Activated CD4-positive, alpha-beta T cell treated with anti-CD3 and anti-CD28 coated beads, Interleukin-2, amount 10 ng/mL, durations not matched to agents 7 days and 5 days (primary cell): ENCODE measurements at regions of chr7 and their contacts with region 1.

Region 1: GRCh38 chr7:150514748-150515222 is at the start of gene GIMAP7:
- DNase-seq: peak; percentile 86
- H3K4me3 Mint-ChIP-seq: peak within 1 kb of the TSS; percentile 98
- H3K27ac Mint-ChIP-seq: peak within 1 kb of the TSS; percentile 97
- H3K4me1 Mint-ChIP-seq: peaks cover 48% of the 10 kb centered on the region
- H3K27me3 Mint-ChIP-seq: no peaks in the 10 kb centered on the region
- total RNA-seq, gene GIMAP7: 239 to 244 TPM

Region 2: GRCh38 chr7:150400008-150400787 is 114.6 kb before region 1 on chr7:
- CTCF ChIA-PET with region 1: no interaction called
- POLR2A ChIA-PET with region 1: no interaction called
- DNase-seq: no peak
- H3K4me3 Mint-ChIP-seq: no peak overlapping the region
- H3K27ac Mint-ChIP-seq: peak overlapping the region; percentile 15
- H3K4me1 Mint-ChIP-seq: peaks cover 17% of the 10 kb centered on the region
- H3K27me3 Mint-ChIP-seq: no peaks in the 10 kb centered on the region

Region 3: GRCh38 chr7:150413640-150414081 is 101.1 kb before region 1 on chr7:
- CTCF ChIA-PET with region 1: no interaction called
- POLR2A ChIA-PET with region 1: no interaction called
- DNase-seq: no peak
- H3K4me3 Mint-ChIP-seq: no peak overlapping the region
- H3K27ac Mint-ChIP-seq: no peak overlapping the region
- H3K4me1 Mint-ChIP-seq: peaks cover 3% of the 10 kb centered on the region
- H3K27me3 Mint-ChIP-seq: no peaks in the 10 kb centered on the region

Region 4: GRCh38 chr7:150502519-150502918 is 12.3 kb before region 1 on chr7:
- CTCF ChIA-PET with region 1: interaction called, 15 read pairs
- POLR2A ChIA-PET with region 1: interaction called, 13 read pairs
- DNase-seq: peak; percentile 73
- H3K4me3 Mint-ChIP-seq: peak overlapping the region; percentile 58
- H3K27ac Mint-ChIP-seq: peak overlapping the region; percentile 92
- H3K4me1 Mint-ChIP-seq: peaks cover 82% of the 10 kb centered on the region
- H3K27me3 Mint-ChIP-seq: no peaks in the 10 kb centered on the region

Region 5: DNA sequence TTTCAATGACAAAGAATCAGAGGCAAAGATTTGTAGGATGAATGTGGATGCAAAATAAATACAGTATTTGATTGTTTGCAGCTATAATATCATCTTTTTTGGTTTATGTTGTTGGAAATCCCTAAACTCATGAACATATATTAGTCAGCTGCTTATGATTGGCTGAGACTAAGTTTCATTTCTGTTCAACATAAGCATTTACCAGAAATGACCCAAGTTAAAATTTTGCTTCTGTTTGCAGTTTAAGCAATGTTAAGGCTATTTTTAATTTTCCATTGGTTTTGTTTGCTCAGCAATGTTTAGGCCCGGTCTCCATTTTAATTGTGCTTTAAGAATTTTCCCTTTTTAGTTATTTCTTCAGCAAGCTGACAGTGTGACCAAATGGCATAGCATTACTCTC is 95.4 kb after region 1 on chr7:
- CTCF ChIA-PET with region 1: no interaction called
- POLR2A ChIA-PET with region 1: no interaction called
- DNase-seq: no peak
- H3K4me3 Mint-ChIP-seq: no peak overlapping the region
- H3K27ac Mint-ChIP-seq: peak overlapping the region; percentile 71
- H3K4me1 Mint-ChIP-seq: peaks cover 73% of the 10 kb centered on the region
- H3K27me3 Mint-ChIP-seq: no peaks in the 10 kb centered on the region

Region 6: DNA sequence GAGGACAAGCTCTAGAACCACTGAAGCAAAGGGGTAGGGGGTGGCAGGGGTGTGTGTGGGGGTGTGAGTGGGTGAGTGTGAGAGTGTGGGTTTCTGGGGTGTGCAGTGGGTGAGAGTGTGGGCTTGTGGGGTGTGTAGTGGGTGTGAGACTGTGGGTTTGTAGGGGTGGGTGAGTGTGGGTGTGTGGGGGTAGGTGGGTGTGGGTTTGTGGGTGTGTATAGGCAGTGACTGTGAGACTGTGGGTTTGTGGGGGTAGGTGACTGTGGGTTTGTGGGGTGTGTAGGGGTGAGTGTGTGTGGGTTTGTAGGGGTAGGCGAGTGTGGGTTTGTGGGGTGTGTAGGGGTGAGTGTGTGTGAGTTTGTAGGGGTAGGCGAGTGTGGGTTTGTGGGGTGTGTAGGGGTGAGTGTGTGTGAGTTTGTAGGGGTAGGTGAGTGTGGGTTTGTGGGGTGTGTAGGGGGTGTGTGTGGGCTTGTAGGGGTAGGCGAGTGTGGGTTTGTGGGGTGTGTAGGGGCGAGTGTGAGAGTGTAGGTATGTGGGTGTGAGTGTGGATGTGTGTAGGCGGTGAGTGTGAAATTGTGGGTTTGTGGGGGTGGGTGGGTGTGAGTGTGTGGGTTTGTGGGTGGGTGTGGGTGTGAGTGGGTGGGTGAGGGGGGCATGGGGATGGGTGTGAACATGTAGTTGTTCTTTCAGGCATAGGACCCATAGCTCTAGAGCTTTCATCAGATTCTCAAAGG is 484.9 kb after region 1 on chr7:
- CTCF ChIA-PET with region 1: no interaction called
- POLR2A ChIA-PET with region 1: no interaction called
- DNase-seq: no peak
- H3K4me3 Mint-ChIP-seq: no peak overlapping the region
- H3K27ac Mint-ChIP-seq: no peak overlapping the region
- H3K4me1 Mint-ChIP-seq: peaks cover 36% of the 10 kb centered on the region
- H3K27me3 Mint-ChIP-seq: no peaks in the 10 kb centered on the region